Posterior vena cava (tissue), 2 donors: ENCODE measurements at regions of chr5 and their contacts with region 1.

Region 1: DNA sequence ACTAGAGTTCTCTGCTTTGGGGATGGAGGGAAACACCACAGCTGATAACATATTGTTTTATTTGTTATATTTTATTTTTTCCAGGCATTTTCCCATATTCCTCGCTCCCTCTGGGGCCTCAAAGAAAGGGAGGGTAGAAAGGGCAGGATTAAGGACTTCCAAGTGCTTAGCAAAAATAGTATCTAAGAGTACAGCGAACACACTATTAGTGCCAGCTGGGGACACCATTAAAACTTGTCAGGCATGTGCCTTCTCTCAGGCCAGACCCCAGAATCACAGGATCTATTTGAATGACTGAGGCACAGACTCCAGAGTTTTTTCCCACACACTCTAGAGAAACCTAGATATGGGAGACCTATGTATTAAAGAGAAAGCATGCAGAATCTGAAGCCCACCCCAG is 451.0 kb upstream of the TRPC7 start:
- DNase-seq: no peak

Region 2: GRCh38 chr5:136420168-136420898 is 396.0 kb before region 1 on chr5:
- intact Hi-C with region 1: no loop called
- DNase-seq: no peak

Region 3: GRCh38 chr5:136840601-136841000 is 24.3 kb after region 1 on chr5:
- intact Hi-C with region 1: loop called in 1 of 2 experiments (anchors 2 kb)
- DNase-seq: no peak